Activated T-helper 2 cell treated with anti-CD3 and anti-CD28 coated beads, Interferon-gamma antibody, Interleukin-2, Interleukin-4, amounts not matched to agents 10 μg/mL and 5 μg/mL and 100 μg/mL, durations not matched to agents 14 hours and 24 hours and 36 hours (primary cell): ENCODE measurements at regions of chr9 and their contacts with region 1.

Region 1: DNA sequence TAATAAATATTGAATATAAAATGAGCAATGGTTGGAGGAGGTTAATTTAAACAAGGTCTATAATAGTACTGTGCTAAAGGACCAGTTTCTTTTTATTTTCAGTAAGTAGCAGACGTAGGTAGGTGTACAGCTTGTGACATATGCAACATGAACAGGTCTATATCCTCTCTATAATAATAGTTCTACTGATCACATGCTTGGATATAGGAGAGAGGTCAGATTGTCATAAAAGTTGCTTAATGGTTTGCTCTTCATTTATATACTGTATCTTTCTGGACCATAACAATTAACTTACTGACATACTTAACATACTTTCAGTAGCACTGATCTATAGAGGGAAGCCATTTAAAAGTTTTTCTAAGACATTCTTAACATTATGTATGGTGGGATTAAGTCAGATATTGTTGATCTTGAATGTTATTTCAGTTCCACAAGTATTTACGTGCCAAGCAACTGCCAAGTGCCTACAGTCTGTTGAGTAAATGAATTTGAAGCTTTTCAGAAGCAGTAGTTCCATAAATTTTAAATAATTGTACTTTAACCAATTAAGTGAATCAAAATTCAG is 68.0 kb downstream of the DENND4C start:
- DNase-seq: no peak
- H3K4me3 Mint-ChIP-seq: no peak overlapping the region
- H3K27ac Mint-ChIP-seq: no peak overlapping the region
- H3K4me1 Mint-ChIP-seq: peaks cover 6% of the 10 kb centered on the region
- H3K27me3 Mint-ChIP-seq: no peaks in the 10 kb centered on the region

Region 2: DNA sequence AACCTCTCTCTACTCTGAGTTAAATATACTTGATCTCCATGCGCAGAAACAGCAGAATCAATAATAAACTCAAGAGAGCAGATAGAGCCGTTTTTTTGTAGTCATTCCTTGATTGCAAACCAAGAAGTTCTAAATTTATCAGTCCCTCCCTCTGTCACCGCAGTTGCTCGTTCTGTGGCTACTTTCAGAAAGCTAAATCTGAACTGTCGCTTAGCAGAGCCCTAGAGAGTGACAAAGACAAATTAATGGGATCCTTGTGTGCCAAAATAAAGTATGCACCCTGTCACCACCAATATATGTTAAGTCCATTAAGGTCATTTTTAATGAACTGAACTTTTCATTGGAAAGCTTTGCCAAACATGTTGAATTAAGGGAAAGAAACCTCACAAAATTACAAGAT is 606.2 kb before region 1 on chr9:
- intact Hi-C with region 1: no loop called
- DNase-seq: no peak
- H3K4me3 Mint-ChIP-seq: no peak overlapping the region
- H3K27ac Mint-ChIP-seq: no peak overlapping the region
- H3K4me1 Mint-ChIP-seq: no peaks in the 10 kb centered on the region
- H3K27me3 Mint-ChIP-seq: no peaks in the 10 kb centered on the region

Region 3: GRCh38 chr9:19239955-19240354 is 58.6 kb before region 1 on chr9:
- intact Hi-C with region 1: no loop called
- DNase-seq: no peak
- H3K4me3 Mint-ChIP-seq: no peak overlapping the region
- H3K27ac Mint-ChIP-seq: no peak overlapping the region
- H3K4me1 Mint-ChIP-seq: peaks cover 4% of the 10 kb centered on the region
- H3K27me3 Mint-ChIP-seq: no peaks in the 10 kb centered on the region

Region 4: DNA sequence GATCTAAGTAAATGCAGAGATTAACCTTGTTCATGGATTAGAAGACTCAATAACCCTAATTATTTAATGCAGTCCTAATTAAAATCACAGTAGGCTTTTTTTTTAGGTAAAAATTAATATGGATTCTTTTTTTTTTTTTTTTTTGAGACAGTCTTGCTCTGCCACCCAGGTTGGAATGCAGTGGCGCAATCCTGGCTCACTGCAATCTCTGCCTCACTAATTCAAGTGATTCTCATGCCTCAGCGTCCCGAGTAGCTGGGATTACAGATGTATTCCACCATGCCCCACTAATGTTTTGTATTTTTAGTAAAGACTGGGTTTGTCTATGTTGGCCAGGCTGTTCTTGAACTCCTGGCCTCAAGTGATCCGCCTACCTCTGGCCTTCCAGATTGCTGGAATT is 27.4 kb before region 1 on chr9:
- intact Hi-C with region 1: loop called (anchors 2 kb)
- DNase-seq: no peak
- H3K4me3 Mint-ChIP-seq: no peak overlapping the region
- H3K27ac Mint-ChIP-seq: no peak overlapping the region
- H3K4me1 Mint-ChIP-seq: peaks cover 29% of the 10 kb centered on the region
- H3K27me3 Mint-ChIP-seq: no peaks in the 10 kb centered on the region

Region 5: DNA sequence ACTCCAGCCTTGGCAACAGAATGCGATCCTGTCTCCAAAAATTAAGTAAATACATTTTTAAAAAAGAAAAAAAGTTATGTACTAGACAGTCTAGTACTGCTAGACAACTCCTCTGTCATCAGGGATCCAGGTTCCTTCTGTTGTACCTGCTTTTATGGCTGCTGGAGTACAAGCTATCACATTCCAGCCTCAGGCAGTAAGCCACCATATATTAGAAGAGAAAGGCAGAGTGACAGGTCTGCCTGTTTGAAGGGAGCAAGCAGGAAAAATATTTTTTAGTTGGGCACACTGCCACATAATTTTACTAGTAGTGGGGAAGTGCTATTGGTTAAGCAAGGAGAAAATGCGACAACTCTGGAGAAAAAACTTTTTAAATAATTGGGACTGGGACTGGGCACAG is 70.6 kb after region 1 on chr9:
- intact Hi-C with region 1: no loop called
- DNase-seq: no peak
- H3K4me3 Mint-ChIP-seq: no peak overlapping the region
- H3K27ac Mint-ChIP-seq: no peak overlapping the region
- H3K4me1 Mint-ChIP-seq: peaks cover 9% of the 10 kb centered on the region
- H3K27me3 Mint-ChIP-seq: no peaks in the 10 kb centered on the region